Body of pancreas (tissue), 4 donors: ENCODE measurements at regions of chr2 and their contacts with region 1.

Region 1: GRCh38 chr2:130181325-130181879 is at the start of gene SMPD4:
- DNase-seq: peak; percentile 97 to 98 (median 98)
- ATAC-seq: peak; percentile 90
- H3K4me3 ChIP-seq: peak within 1 kb of the TSS; percentile 86 to 90
- H3K27ac ChIP-seq: peak within 1 kb of the TSS; percentile 79 to 93 (median 91)
- H3K4me1 ChIP-seq: peaks cover 27% of the 10 kb centered on the region
- H3K27me3 ChIP-seq: no peaks in the 10 kb centered on the region
- CTCF ChIP-seq: no peak
- POLR2A ChIP-seq: peak; percentile 34 to 69 (median 58)
- total RNA-seq, gene SMPD4: 25.4 to 33.3 TPM

Region 2: GRCh38 chr2:130342533-130343275 is 161.3 kb after region 1 on chr2 and contains the start of gene IMP4:
- intact Hi-C with region 1: loop called (anchors 5 kb)
- DNase-seq: peak; percentile 97 to 99 (median 98)
- ATAC-seq: peak; percentile 95
- H3K4me3 ChIP-seq: peak within 1 kb of the TSS; percentile 81 to 93
- H3K27ac ChIP-seq: peak within 1 kb of the TSS; percentile 87 to 91 (median 89)
- H3K4me1 ChIP-seq: peaks cover 20% of the 10 kb centered on the region
- H3K27me3 ChIP-seq: no peaks in the 10 kb centered on the region
- CTCF ChIP-seq: peak in 6 of 7 experiments; percentile 21 to 50 (median 36)
- POLR2A ChIP-seq: peak; percentile 23 to 72 (median 64)
- total RNA-seq, gene IMP4: 77.5 to 78.1 TPM